Mucosa of descending colon (tissue), 3 donors: ENCODE measurements at regions of chr14 and their contacts with region 1.

Region 1: DNA sequence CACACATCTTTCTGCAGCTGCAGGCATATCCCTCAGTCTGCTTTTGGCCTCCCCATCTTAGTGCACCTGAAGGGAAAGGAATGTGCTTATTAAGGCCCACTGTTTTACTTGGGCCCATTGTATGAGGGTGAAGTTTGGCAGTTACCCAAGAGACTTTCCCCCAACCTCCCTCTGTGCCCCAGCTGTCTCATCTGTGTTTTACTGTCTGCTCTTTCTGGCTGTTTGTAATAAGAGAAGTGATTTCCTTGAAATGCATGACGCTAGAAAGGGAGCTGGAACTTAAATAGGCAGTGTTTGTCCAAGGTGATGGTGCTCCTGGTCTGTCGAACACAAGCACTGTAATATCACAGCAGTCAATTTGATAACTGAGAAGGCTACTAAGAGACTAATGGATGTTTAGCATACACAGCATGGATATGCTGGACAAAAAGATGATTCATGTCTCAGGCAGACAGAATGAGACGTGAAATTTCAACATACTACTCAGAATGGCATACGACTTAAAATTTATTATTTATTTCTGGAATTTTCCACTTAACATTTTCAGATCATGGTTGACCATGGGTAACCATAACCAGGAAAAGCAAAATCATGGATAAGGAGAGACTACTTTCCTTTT is 43.6 kb downstream of the FSCB start:
- DNase-seq: no peak
- ATAC-seq: no peak
- H3K4me3 ChIP-seq: no peak overlapping the region
- H3K4me1 ChIP-seq: no peaks in the 10 kb centered on the region
- CTCF ChIP-seq: no peak

Region 2: DNA sequence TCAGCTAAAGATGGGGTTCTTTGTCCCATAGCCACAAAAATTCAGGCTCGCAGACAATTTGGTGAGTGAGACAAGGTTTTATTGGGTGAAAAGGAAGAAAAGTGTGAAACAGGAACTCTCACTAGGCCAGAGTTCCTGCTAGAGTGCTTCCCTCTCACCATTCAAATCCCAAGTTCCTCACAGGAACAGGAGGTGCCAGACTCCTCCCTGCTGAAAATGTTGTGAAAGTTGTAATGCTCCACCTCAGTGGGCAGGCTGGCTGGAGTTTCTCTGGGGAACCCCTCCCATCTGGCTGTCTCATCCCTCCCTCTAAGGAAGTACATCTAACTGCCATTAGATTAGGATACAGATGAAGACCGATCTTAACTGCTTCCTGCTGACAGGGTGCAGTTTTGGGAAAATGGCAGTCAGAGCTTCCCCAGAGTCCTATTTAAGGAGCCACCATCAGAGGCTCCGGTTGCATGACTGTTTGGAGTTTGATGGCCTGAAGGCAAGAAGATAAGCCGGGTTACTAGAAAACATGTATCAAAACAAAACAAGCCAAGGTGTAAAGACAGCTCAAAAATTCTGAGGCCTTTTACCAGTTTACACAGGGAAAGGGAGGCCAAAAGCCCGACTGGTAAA is 84.1 kb before region 1 on chr14:
- intact Hi-C with region 1: no loop called
- DNase-seq: no peak
- ATAC-seq: no peak
- H3K4me3 ChIP-seq: no peak overlapping the region
- H3K4me1 ChIP-seq: no peaks in the 10 kb centered on the region
- CTCF ChIP-seq: no peak

Region 3: GRCh38 chr14:44479375-44479774 is 15.9 kb after region 1 on chr14:
- intact Hi-C with region 1: loop called in 1 of 2 experiments (anchors 2 kb)
- DNase-seq: no peak
- ATAC-seq: no peak
- H3K4me3 ChIP-seq: no peak overlapping the region
- H3K4me1 ChIP-seq: no peaks in the 10 kb centered on the region
- CTCF ChIP-seq: no peak